OCI-LY7 (cell line): ENCODE measurements at regions of chrX and their contacts with region 1.

Region 1: GRCh38 chrX:152821145-152821765 is 9.3 kb downstream of the CETN2 start:
- DNase-seq: peak; percentile 25
- H3K4me3 ChIP-seq: no peak overlapping the region
- H3K27ac ChIP-seq: no peak overlapping the region
- H3K4me1 ChIP-seq: no peaks in the 10 kb centered on the region
- CTCF ChIP-seq: peak; percentile 73

Region 2: DNA sequence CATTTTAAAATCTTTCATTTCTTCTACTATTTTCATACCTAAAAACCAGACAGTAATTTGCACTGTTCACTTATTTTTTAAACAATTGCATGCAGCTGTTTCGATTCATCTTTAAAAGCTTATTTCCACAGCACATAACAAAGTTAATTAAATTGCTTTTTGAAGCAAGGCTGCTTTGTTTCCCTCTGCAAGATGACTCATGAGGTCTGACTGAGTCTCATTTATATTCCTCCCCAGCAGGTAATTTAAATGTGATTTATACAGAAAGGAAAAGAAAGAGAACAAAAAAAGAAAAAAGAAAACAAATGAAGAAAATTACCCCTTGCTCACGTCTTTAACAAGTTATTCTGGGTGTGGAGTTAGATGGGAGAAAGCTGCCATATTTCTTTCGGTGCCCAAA is 1401.5 kb before region 1 on chrX:
- CTCF ChIA-PET with region 1: no interaction called
- POLR2A ChIA-PET with region 1: no interaction called
- intact Hi-C with region 1: loop called (anchors 10 kb)
- DNase-seq: no peak
- H3K4me3 ChIP-seq: no peak overlapping the region
- H3K27ac ChIP-seq: no peak overlapping the region
- H3K4me1 ChIP-seq: no peaks in the 10 kb centered on the region
- CTCF ChIP-seq: no peak